ENCODE measurements at regions of chr3 and their contacts with region 1.

Region 1: DNA sequence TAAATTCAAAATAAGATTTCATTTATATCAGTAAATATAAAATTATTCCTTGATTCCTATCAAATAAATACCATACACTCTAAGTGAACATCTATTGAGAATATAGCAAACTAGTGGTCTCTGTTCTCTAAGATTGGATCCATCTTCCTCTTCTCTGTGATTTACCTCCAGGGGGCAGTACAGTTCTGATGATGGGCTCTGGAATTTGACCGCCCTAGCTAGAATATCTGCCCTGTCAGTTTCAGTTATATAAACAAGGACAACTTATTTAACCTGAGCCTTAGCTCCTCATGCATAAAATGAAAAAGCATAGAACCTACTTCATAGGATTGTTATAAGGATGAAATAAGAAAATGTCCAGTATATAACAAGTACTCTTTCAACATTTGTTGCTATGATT is 171.1 kb upstream of the CCDC54 start:
- DNase-seq: peak; percentile 26 to 57
- H3K4me3 ChIP-seq: no peak overlapping the region
- H3K27ac ChIP-seq: no peak overlapping the region
- H3K4me1 ChIP-seq: peaks cover 32% of the 10 kb centered on the region
- H3K27me3 ChIP-seq: no peaks in the 10 kb centered on the region
- CTCF ChIP-seq: peak; percentile 90

Region 2: DNA sequence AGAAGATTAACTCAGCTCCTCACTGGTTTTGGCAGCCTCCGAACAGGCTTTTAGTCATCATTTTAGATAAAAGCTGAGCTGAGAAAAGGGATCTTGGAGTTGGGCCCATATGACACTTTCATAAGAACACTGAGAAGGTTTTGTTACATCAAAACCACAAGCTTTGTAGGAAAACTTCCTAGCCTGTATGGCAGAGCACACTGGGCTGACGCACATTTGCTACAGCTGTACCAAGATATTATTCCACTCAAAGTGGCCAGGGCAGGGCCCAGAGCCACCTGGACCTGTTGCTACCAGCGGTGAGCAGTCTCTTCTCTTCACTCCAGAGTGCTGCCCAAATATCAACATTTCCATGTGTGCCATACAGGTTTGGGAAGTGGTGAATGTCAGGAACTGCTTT is 10.6 kb after region 1 on chr3:
- CTCF ChIA-PET with region 1: no interaction called
- POLR2A ChIA-PET with region 1: no interaction called
- intact Hi-C with region 1: loop called (anchors 1 kb)
- DNase-seq: peak in 1 of 2 experiments; percentile 57
- H3K4me3 ChIP-seq: peak overlapping the region; percentile 6; the same call in 1 of the 2 replicates
- H3K27ac ChIP-seq: peak overlapping the region; percentile 87
- H3K4me1 ChIP-seq: peaks cover 46% of the 10 kb centered on the region
- H3K27me3 ChIP-seq: no peaks in the 10 kb centered on the region
- CTCF ChIP-seq: 0 out of 2 replicates have a peak, but pooled peaks have one; percentile 18

Region 3: GRCh38 chr3:107297597-107297996 is 91.5 kb after region 1 on chr3:
- CTCF ChIA-PET with region 1: no interaction called
- POLR2A ChIA-PET with region 1: no interaction called
- intact Hi-C with region 1: no loop called
- DNase-seq: no peak
- H3K4me3 ChIP-seq: no peak overlapping the region
- H3K27ac ChIP-seq: no peak overlapping the region
- H3K4me1 ChIP-seq: no peaks in the 10 kb centered on the region
- H3K27me3 ChIP-seq: no peaks in the 10 kb centered on the region
- CTCF ChIP-seq: no peak